HepG2 (cell line): ENCODE measurements at regions of chr7 and their contacts with region 1.

Region 1: GRCh38 chr7:32957326-32958045 is at the start of gene FKBP9:
- DNase-seq: peak; percentile 76
- ATAC-seq: peak; percentile 96
- H3K4me3 ChIP-seq: peak within 1 kb of the TSS; percentile 68 to 90 (median 75)
- H3K27ac ChIP-seq: peak within 1 kb of the TSS; percentile 95
- H3K4me1 ChIP-seq: peaks cover 18% of the 10 kb centered on the region
- H3K27me3 ChIP-seq: no peaks in the 10 kb centered on the region
- CTCF ChIP-seq: 0 out of 2 replicates have a peak, but pooled peaks have one; percentile 10
- EP300 ChIP-seq: no peak
- POLR2A ChIP-seq: peak; percentile 87 to 96
- RAD21 ChIP-seq: no peak; the same call in 1 of the 2 replicates
- total RNA-seq, gene FKBP9: 24.5 and 41.5 TPM in 2 replicates

Region 2: DNA sequence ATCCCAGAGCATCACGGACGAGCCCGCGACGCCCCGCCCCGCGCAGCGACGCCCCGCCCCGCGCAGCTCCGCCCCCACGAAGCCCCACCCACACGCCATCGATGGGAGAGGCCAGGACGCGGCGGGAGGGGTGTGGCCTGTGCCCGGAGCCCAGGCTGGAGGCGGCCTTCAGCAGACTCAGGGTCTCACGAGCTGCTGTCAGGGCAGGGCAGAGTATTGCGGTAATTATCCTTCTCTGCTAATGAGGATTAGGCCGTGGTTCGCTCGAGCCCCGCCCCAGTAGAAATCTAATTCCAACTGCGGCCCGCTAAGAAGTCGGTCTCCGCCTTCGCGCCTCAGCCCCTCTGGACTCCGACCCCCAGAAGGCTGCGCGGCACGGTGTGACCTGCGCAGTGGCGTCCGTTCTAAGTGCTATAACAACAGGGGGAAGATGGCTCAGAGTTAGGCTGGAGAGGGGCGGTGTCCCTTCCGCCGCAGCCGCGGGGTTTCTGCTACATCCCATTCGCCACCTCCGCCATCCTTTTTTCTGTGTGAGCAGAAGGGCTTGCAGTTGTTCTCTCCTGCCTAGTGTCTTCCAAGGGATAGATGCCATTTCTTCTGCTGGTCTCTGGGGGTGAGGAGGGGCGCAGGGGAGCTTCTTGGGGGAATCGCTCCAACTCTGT is 105.4 kb after region 1 on chr7:
- CTCF ChIA-PET with region 1: no interaction called
- POLR2A ChIA-PET with region 1: interaction called, 17 read pairs
- in situ Hi-C with region 1: no loop called
- intact Hi-C with region 1: loop called (anchors 5 kb)
- DNase-seq: peak; percentile 90
- ATAC-seq: peak; percentile 98
- H3K4me3 ChIP-seq: peak overlapping the region; percentile 78 to 100 (median 93)
- H3K27ac ChIP-seq: peak overlapping the region; percentile 90
- H3K4me1 ChIP-seq: peaks cover 41% of the 10 kb centered on the region
- H3K27me3 ChIP-seq: no peaks in the 10 kb centered on the region
- CTCF ChIP-seq: peak; percentile 18; the same call in 1 of the 2 replicates
- EP300 ChIP-seq: no peak
- POLR2A ChIP-seq: peak; percentile 46 to 78; a peak in 3 of 4 replicates
- RAD21 ChIP-seq: no peak; the same call in 1 of the 2 replicates

Region 3: DNA sequence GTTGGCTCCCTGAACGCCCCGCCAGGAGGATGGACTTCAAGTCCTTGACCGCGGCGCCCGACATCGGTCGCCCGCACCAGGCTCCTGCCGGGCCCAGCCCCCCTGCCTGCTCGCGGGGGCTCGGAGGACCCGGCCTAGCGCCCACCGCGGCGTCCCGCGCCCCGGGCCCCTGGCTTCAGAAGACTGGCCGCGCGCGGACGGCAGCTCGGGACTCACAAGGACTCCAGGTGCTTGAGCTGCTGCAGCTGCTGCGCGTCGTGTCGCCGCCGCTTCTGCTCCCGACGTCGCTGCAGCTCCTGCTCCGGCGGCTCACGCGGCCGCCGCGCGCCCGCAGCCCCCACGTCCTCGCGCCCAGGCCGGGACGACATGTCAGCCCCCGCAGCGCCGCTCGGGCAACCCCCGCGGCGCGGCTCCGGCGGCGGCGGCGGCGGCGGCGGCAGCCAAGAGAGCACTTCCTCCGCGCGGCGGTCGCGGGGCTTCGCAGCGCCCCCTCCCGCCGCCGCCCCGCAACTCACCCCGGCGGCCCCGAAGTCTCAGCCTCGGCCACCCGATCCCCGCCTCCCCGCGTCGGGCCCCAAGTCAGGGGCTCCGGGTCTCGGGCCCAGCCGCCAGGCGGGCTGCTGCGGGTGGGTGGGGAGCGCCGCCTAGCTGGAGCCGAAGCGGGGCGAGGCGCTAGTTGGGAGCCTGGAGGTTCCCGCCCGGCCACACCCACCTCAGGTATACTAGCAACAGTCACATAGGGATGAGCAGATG is 151.7 kb after region 1 on chr7 and contains the start of gene RP9:
- CTCF ChIA-PET with region 1: no interaction called
- POLR2A ChIA-PET with region 1: interaction called, 5 read pairs
- in situ Hi-C with region 1: no loop called
- intact Hi-C with region 1: loop called (anchors 5 kb)
- DNase-seq: peak; percentile 71
- ATAC-seq: peak; percentile 91
- H3K4me3 ChIP-seq: peak within 1 kb of the TSS; percentile 85 to 88 (median 87)
- H3K27ac ChIP-seq: peak within 1 kb of the TSS; percentile 77
- H3K4me1 ChIP-seq: peaks cover 55% of the 10 kb centered on the region
- H3K27me3 ChIP-seq: peaks cover 1 to 6% of the 10 kb centered on the region in 2 experiments; a peak in 2 of 5 replicates
- CTCF ChIP-seq: peak; percentile 76
- EP300 ChIP-seq: no peak
- POLR2A ChIP-seq: peak; percentile 69
- RAD21 ChIP-seq: peak; percentile 75; the same call in 1 of the 2 replicates
- total RNA-seq, gene RP9: 14.2 and 15.1 TPM in 2 replicates